B cell (primary cell): ENCODE measurements at regions of chr19 and their contacts with region 1.

Region 1: DNA sequence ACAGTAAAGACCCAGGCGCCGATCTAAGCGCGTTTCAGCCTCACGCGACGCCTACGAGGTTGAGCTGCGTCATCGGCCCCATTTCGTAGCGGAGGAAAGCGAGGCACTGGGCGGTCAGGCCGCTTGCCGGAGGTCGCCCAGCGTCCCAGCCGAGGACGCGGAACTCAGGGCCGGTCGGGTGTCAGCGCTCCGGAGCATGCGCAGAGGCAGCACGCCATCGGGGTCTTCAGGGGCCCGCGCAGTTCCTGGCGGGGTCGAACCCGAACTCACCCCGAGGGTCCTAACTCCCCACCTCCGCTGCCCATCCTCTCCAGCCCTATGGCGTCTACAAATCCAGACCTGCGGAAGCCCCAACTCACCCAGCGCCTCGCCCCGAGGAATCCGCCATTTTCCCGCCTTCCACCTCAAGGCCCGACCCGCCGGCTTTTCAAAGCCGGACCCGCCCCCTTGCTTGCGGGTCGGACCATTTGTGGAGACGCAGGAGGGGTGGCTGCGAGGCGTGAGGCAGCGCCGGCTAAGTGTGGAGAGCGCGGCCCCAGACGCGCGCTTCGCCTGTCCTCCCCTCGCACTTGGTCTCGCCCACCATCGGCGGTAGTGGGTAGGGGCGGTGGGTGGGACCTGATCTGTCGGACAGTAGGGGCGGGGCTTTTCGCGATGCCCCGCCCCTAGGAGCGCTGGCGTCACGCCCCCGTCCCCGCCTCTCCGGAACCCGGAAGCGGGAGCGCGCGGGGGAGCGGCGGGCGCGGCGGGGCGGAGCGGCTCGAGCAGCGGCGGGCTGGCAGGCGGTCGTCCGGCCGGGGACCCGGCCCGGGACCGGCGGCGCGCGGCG is at the starts of genes HAUS8 and MYO9B:
- DNase-seq: peak; percentile 100
- ATAC-seq: peak; percentile 87
- H3K4me3 ChIP-seq: peak within 1 kb of the TSS; percentile 77 to 93 (median 86)
- H3K4me3 Mint-ChIP-seq: peak within 1 kb of the TSS; percentile 98
- H3K27ac ChIP-seq: peak within 1 kb of the TSS; percentile 79 to 89
- H3K27ac Mint-ChIP-seq: peak within 1 kb of the TSS; percentile 99
- H3K4me1 ChIP-seq: peaks cover 44 to 65% of the 10 kb centered on the region in 2 donors
- H3K4me1 Mint-ChIP-seq: peaks cover 66% of the 10 kb centered on the region
- H3K27me3 ChIP-seq: no peaks in the 10 kb centered on the region
- H3K27me3 Mint-ChIP-seq: no peaks in the 10 kb centered on the region
- CTCF ChIP-seq: no peak
- total RNA-seq, gene HAUS8: 22.4 and 24.9 TPM in 2 replicates
- total RNA-seq, gene MYO9B: 273 and 288 TPM in 2 replicates

Region 2: GRCh38 chr19:16944626-16945363 is 130.5 kb before region 1 on chr19:
- CTCF ChIA-PET with region 1: no interaction called
- POLR2A ChIA-PET with region 1: no interaction called
- intact Hi-C with region 1: no loop called
- DNase-seq: no peak
- ATAC-seq: no peak
- H3K4me3 ChIP-seq: no peak overlapping the region
- H3K4me3 Mint-ChIP-seq: no peak overlapping the region
- H3K27ac ChIP-seq: no peak overlapping the region
- H3K27ac Mint-ChIP-seq: no peak overlapping the region
- H3K4me1 ChIP-seq: no peaks in the 10 kb centered on the region
- H3K4me1 Mint-ChIP-seq: no peaks in the 10 kb centered on the region
- H3K27me3 ChIP-seq: peaks cover 0 to 11% (median 0%) of the 10 kb centered on the region in 4 experiments
- H3K27me3 Mint-ChIP-seq: peaks cover 4% of the 10 kb centered on the region
- CTCF ChIP-seq: no peak

Region 3: GRCh38 chr19:16969127-16969526 is 106.1 kb before region 1 on chr19:
- CTCF ChIA-PET with region 1: no interaction called
- POLR2A ChIA-PET with region 1: no interaction called
- intact Hi-C with region 1: no loop called
- DNase-seq: no peak
- ATAC-seq: no peak
- H3K4me3 ChIP-seq: no peak overlapping the region
- H3K4me3 Mint-ChIP-seq: no peak overlapping the region
- H3K27ac ChIP-seq: no peak overlapping the region
- H3K27ac Mint-ChIP-seq: no peak overlapping the region
- H3K4me1 ChIP-seq: no peaks in the 10 kb centered on the region
- H3K4me1 Mint-ChIP-seq: no peaks in the 10 kb centered on the region
- H3K27me3 ChIP-seq: no peaks in the 10 kb centered on the region
- H3K27me3 Mint-ChIP-seq: peaks cover 8% of the 10 kb centered on the region
- CTCF ChIP-seq: no peak

Region 4: DNA sequence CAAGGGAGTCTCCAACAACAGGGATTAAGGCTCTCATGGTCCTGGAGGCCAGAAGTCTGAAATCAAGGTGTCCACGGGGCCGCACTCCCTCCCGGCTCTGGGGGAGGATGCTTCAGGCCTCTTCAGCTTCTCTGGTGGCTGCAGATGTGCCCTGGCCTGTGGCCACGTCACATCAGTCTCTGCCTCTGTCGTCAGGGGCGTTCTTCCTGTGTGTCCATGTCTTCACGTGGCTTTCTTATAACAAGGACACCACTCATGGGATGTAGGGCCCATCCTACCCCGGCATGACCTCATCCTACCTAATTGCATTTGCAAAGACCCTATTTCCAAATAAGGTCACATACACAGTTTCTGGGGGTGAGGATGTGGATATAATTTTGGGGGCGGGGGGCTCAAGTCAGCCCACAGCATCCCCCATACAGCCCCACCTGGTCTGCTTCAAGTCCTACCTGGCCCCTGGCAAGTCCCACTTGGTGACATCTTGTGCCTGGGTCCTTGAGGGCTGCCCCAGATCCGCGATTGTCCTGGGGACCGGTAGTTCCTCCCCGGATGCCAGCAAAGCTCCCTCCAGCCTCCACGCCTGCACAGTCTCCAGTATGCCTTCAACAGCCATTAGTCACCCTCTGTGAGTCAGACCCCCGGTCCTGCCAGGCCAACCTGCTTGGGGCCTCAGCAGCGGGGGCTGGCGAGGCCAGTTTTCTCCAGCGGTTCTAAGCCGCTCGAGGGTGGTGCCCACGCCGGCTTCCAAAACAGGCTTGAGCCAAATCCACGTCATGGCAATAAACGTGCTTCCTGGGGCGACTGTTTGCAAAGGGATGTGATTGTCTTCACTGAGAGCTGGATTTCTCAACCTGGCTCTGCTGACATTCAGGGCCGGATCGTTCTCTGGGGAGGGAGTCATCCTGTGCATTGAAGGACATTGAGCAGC is 32.5 kb after region 1 on chr19:
- CTCF ChIA-PET with region 1: interaction called, 4 read pairs
- POLR2A ChIA-PET with region 1: interaction called, 5 read pairs
- intact Hi-C with region 1: loop called (anchors 1 kb)
- DNase-seq: peak; percentile 35
- ATAC-seq: no peak
- H3K4me3 ChIP-seq: no peak overlapping the region
- H3K4me3 Mint-ChIP-seq: peak overlapping the region; percentile 72
- H3K27ac ChIP-seq: peak overlapping the region; percentile 18 to 45
- H3K27ac Mint-ChIP-seq: peak overlapping the region; percentile 87
- H3K4me1 ChIP-seq: peaks cover 88 to 97% of the 10 kb centered on the region in 2 donors
- H3K4me1 Mint-ChIP-seq: peaks cover 87% of the 10 kb centered on the region
- H3K27me3 ChIP-seq: no peaks in the 10 kb centered on the region
- H3K27me3 Mint-ChIP-seq: no peaks in the 10 kb centered on the region
- CTCF ChIP-seq: no peak

Region 5: DNA sequence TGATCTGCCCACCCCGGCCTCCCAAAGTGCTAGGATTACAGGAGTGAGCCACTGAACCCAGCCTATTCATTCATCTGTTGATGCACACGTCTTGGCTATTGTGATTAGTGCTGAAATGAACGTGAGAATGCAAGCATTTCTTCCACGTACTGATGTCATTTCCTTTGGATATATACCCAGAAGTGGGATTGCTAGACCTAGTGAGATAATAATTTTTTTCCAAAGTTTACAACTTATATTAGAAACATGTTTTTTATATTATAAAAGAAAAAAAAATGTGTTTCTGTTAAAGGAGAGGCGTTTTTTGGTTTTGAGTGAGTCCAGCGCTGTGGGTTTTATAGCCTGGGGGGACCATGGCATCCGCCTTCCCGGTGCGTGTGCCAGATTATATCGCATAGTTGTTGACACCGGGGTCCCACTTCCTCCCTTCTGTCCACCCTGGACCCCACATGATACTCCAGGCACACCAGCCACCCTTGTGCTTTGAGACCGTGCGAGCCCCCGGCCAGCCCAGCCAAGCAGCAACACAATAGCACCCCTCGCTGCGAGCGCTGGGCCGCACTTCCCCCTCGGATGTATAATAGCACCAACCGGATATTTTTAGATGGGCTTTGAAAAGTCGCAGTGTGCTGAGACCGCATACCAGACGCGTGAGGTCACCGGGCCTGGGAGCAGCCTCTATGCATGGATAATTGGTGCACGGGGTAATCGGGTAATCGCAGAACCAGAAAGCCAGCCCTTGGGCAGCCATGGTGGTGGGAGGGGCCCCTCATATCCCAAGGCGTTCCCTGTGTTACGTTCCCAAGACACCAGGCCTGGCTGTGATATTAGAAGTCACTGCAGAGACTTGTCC is 60.0 kb after region 1 on chr19:
- CTCF ChIA-PET with region 1: interaction called, 3 read pairs
- POLR2A ChIA-PET with region 1: interaction called, 3 read pairs
- intact Hi-C with region 1: loop called (anchors 1 kb)
- DNase-seq: peak; percentile 88
- ATAC-seq: peak; percentile 88
- H3K4me3 ChIP-seq: peak overlapping the region in 3 of 5 experiments; percentile 22 to 49 (median 31)
- H3K4me3 Mint-ChIP-seq: peak overlapping the region; percentile 86
- H3K27ac ChIP-seq: peak overlapping the region; percentile 87 to 95
- H3K27ac Mint-ChIP-seq: peak overlapping the region; percentile 96
- H3K4me1 ChIP-seq: peaks cover 38 to 55% of the 10 kb centered on the region in 2 donors
- H3K4me1 Mint-ChIP-seq: peaks cover 60% of the 10 kb centered on the region
- H3K27me3 ChIP-seq: no peaks in the 10 kb centered on the region
- H3K27me3 Mint-ChIP-seq: no peaks in the 10 kb centered on the region
- CTCF ChIP-seq: no peak

Region 6: DNA sequence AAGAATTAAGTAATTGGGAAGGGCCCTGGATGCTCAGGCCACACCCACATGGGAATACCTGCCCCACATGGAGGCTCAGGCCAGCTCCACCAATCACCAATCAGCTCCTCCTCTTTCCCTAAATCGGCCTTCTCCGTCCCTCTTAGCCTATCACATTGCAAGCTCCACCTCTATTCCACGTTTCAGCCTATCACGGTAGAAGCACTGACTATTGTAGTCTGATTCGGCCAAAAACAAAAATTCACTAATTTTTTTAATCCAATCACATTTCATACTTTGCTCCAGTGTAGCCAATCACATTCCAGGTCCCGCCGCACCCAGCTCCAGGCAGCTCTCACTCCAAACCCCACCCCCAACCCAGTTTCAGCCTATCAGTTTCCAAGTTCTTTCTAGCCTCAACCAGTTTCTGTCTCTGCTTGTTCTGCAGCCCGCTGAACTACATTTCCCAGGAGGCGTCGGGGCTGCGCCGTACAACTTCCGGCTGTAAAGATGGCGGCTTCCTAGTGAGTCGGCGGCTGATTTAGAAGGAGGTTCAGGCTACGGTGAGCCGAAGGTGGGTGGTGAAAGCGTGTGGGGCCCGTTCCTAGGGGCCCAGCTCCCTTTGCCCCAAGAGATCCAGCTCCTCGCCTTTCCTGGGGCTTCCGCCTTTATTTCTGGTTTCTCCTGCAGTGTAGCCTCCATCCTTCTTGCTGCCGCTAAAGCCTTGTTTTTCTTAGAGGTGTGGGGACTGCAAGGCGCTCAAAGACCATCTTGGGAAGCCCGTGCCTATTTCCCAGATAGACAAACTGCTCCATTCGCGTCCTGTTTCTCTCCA is 191.9 kb after region 1 on chr19 and contains the start of gene BABAM1:
- CTCF ChIA-PET with region 1: interaction called, 3 read pairs
- POLR2A ChIA-PET with region 1: no interaction called
- intact Hi-C with region 1: loop called (anchors 1 kb)
- DNase-seq: peak; percentile 98
- ATAC-seq: peak; percentile 89
- H3K4me3 ChIP-seq: peak within 1 kb of the TSS; percentile 76 to 95 (median 87)
- H3K4me3 Mint-ChIP-seq: peak within 1 kb of the TSS; percentile 84
- H3K27ac ChIP-seq: peak within 1 kb of the TSS; percentile 56 to 67
- H3K27ac Mint-ChIP-seq: peak within 1 kb of the TSS; percentile 86
- H3K4me1 ChIP-seq: peaks cover 6 to 24% of the 10 kb centered on the region in 2 donors
- H3K4me1 Mint-ChIP-seq: peaks cover 18% of the 10 kb centered on the region
- H3K27me3 ChIP-seq: no peaks in the 10 kb centered on the region
- H3K27me3 Mint-ChIP-seq: no peaks in the 10 kb centered on the region
- CTCF ChIP-seq: no peak
- total RNA-seq, gene BABAM1: 126 and 129 TPM in 2 replicates